H1 (cell line): ENCODE measurements at regions of chr15 and their contacts with region 1.

Region 1: GRCh38 chr15:83248151-83249029 is 36.1 kb downstream of the BNC1 start:
- DNase-seq: peak; percentile 43 to 54
- H3K4me3 ChIP-seq: no peak overlapping the region
- H3K27ac ChIP-seq: no peak overlapping the region
- H3K4me1 ChIP-seq: peaks cover 0 to 10% (median 4%) of the 10 kb centered on the region in 4 experiments; a peak in 5 of 7 replicates
- H3K27me3 ChIP-seq: no peaks in the 10 kb centered on the region; a peak in 2 of 7 replicates
- CTCF ChIP-seq: peak in 2 of 3 experiments; percentile 76 to 79; a peak in 3 of 4 replicates
- EP300 ChIP-seq: no peak
- POLR2A ChIP-seq: no peak
- RAD21 ChIP-seq: peak; percentile 96

Region 2: DNA sequence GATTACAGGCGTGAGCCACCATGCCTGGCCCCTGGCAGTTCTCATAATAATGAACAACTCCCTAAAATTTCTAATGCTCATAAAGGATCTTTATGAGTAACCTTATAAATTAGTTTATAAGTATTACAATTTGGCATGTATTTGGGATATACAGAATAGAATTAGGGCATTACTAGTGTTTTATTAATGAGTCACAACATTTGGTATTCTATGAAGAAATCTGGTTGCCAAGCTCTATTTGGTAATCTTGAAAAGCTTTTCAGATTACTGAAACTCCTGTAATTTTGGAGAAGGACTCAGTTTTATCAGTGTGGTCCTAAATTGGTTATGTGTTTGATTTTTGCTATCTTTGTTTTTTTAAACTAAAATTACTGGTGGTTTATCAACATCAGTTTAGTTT is 95.1 kb before region 1 on chr15:
- CTCF ChIA-PET with region 1: no interaction called
- POLR2A ChIA-PET with region 1: no interaction called
- DNase-seq: no peak
- H3K4me3 ChIP-seq: no peak overlapping the region
- H3K27ac ChIP-seq: no peak overlapping the region
- H3K4me1 ChIP-seq: no peaks in the 10 kb centered on the region
- H3K27me3 ChIP-seq: no peaks in the 10 kb centered on the region
- CTCF ChIP-seq: no peak
- EP300 ChIP-seq: no peak
- POLR2A ChIP-seq: no peak
- RAD21 ChIP-seq: no peak

Region 3: GRCh38 chr15:83372420-83372891 is 124.1 kb after region 1 on chr15:
- CTCF ChIA-PET with region 1: interaction called, 26 read pairs
- POLR2A ChIA-PET with region 1: interaction called, 3 read pairs
- DNase-seq: no peak
- H3K4me3 ChIP-seq: no peak overlapping the region
- H3K27ac ChIP-seq: no peak overlapping the region
- H3K4me1 ChIP-seq: peaks cover 0 to 6% (median 2%) of the 10 kb centered on the region in 4 experiments; a peak in 4 of 7 replicates
- H3K27me3 ChIP-seq: peaks cover 0 to 5% (median 0%) of the 10 kb centered on the region in 4 experiments; a peak in 4 of 7 replicates
- CTCF ChIP-seq: no peak
- EP300 ChIP-seq: no peak
- POLR2A ChIP-seq: no peak
- RAD21 ChIP-seq: no peak

Region 4: GRCh38 chr15:83413054-83413719 is 164.8 kb after region 1 on chr15:
- CTCF ChIA-PET with region 1: interaction called, 11 read pairs
- POLR2A ChIA-PET with region 1: no interaction called
- DNase-seq: no peak
- H3K4me3 ChIP-seq: no peak overlapping the region
- H3K27ac ChIP-seq: no peak overlapping the region
- H3K4me1 ChIP-seq: no peaks in the 10 kb centered on the region
- H3K27me3 ChIP-seq: no peaks in the 10 kb centered on the region
- CTCF ChIP-seq: no peak
- EP300 ChIP-seq: no peak
- POLR2A ChIP-seq: no peak
- RAD21 ChIP-seq: no peak

Region 5: DNA sequence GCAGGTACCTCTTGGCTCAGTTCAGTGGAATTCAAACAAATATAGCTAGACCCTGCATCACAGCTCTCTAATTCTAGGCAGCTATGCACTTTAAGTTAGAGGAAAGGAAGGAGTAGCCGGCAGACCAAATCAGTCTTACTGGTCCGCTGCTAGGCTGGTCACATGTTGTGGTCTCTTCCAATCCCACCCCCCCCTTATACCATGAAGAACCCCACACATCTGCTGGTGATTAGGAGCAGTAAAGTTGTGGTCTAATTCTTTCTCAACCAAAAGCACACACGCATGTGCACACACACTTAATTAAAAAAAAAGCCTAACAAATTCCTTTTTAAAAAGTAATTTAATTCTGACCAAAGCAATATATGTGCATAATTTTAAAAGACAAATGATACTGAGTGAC is 182.1 kb after region 1 on chr15:
- CTCF ChIA-PET with region 1: interaction called, 262 read pairs
- POLR2A ChIA-PET with region 1: no interaction called
- DNase-seq: no peak
- H3K4me3 ChIP-seq: no peak overlapping the region
- H3K27ac ChIP-seq: no peak overlapping the region
- H3K4me1 ChIP-seq: peaks cover 0 to 4% (median 0%) of the 10 kb centered on the region in 4 experiments; a peak in 1 of 7 replicates
- H3K27me3 ChIP-seq: no peaks in the 10 kb centered on the region
- CTCF ChIP-seq: no peak
- EP300 ChIP-seq: no peak
- POLR2A ChIP-seq: no peak
- RAD21 ChIP-seq: no peak

Region 6: DNA sequence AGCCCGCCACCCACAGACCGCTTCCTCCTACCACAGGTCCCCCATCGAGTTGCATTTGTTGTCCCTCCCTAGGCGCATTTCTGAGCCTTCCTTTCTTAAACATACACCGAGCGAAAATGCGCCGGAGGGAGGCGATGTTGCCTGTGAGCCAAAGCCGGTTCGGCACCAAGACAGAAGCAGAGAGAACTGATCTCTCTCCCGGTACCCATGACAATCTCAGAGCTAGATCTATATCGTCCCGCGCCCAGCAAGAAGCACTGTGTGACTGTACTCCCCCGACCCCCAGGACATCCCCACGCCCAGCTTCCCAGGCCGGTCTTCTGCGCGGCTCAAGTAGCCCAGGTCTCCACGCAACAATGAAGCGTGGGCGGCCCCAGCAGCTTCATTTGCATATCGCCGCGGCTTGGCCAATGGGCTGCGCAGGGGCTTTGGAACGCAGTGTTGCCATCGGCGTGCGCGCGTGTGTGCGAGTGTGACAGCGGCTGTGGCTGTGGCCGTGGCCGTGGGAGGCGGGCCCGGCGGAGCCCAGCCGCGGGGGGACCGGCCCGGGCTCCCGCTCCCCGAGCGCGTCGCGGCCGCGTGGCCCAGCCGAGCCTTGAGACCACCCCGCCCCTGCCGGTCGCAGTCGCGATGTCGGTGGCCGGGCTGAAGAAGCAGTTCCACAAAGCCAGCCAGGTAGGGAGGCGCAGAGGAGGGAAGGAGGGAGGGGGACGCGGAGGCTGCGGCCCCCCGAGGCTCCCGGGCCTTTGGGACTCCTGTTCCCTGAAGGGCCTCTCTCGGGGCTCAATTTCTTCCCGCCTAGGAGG is 198.7 kb after region 1 on chr15 and contains the start of gene SH3GL3:
- CTCF ChIA-PET with region 1: interaction called, 41 read pairs
- POLR2A ChIA-PET with region 1: interaction called, 4 read pairs
- DNase-seq: peak; percentile 64 to 85
- H3K4me3 ChIP-seq: peak within 1 kb of the TSS; percentile 48 to 80 (median 70)
- H3K27ac ChIP-seq: 0 out of 2 replicates have a peak within 1 kb of the TSS, but pooled peaks have one; percentile 4
- H3K4me1 ChIP-seq: peaks cover 0 to 9% (median 4%) of the 10 kb centered on the region in 4 experiments; a peak in 4 of 7 replicates
- H3K27me3 ChIP-seq: peaks cover 0 to 11% (median 7%) of the 10 kb centered on the region in 4 experiments; a peak in 5 of 7 replicates
- CTCF ChIP-seq: peak; percentile 60 to 68 (median 66)
- EP300 ChIP-seq: no peak
- POLR2A ChIP-seq: peak in 1 of 2 experiments; percentile 58; a peak in 1 of 3 replicates
- RAD21 ChIP-seq: peak; percentile 78 to 85
- total RNA-seq, gene SH3GL3: 16.3 and 19.1 TPM in 2 replicates

Region 7: GRCh38 chr15:83564975-83565532 is 316.7 kb after region 1 on chr15:
- CTCF ChIA-PET with region 1: interaction called, 52 read pairs
- POLR2A ChIA-PET with region 1: no interaction called
- DNase-seq: no peak
- H3K4me3 ChIP-seq: no peak overlapping the region
- H3K27ac ChIP-seq: no peak overlapping the region
- H3K4me1 ChIP-seq: no peaks in the 10 kb centered on the region
- H3K27me3 ChIP-seq: no peaks in the 10 kb centered on the region
- CTCF ChIP-seq: no peak
- EP300 ChIP-seq: no peak
- POLR2A ChIP-seq: no peak
- RAD21 ChIP-seq: no peak